Activated CD4-positive, alpha-beta T cell treated with anti-CD3 and anti-CD28 coated beads for 36 hours (primary cell): ENCODE measurements at regions of chr17 and their contacts with region 1.

Region 1: DNA sequence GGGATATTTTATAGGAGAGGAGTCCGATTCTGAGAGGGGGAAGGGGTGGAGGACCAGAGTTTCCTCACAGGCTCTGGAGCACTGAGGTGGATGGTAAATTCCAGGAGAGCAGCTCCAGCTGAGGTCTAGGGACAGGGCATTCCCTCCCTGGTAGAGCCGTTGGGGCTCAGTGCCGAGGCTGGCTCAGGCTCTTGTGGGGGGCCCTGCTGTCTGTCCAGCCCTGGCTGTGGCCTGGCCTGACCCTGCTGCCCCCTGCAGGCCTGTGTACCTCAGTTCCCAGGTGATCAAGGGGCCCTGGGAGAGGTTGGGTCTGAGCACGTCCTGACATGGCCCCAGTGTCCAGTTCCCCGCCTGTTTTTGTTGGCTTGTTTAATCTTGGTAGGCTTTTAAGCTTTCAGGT is 16.8 kb downstream of the ZNF750 start:
- DNase-seq: no peak
- ATAC-seq: no peak
- H3K4me3 Mint-ChIP-seq: no peak overlapping the region
- H3K27ac Mint-ChIP-seq: no peak overlapping the region
- H3K4me1 Mint-ChIP-seq: no peaks in the 10 kb centered on the region
- H3K27me3 Mint-ChIP-seq: no peaks in the 10 kb centered on the region

Region 2: GRCh38 chr17:82810644-82811430 is 12.2 kb before region 1 on chr17:
- CTCF ChIA-PET with region 1: no interaction called
- POLR2A ChIA-PET with region 1: interaction called, 11 read pairs
- intact Hi-C with region 1: no loop called
- DNase-seq: no peak
- ATAC-seq: no peak
- H3K4me3 Mint-ChIP-seq: no peak overlapping the region
- H3K27ac Mint-ChIP-seq: no peak overlapping the region
- H3K4me1 Mint-ChIP-seq: peaks cover 2% of the 10 kb centered on the region
- H3K27me3 Mint-ChIP-seq: no peaks in the 10 kb centered on the region

Region 3: DNA sequence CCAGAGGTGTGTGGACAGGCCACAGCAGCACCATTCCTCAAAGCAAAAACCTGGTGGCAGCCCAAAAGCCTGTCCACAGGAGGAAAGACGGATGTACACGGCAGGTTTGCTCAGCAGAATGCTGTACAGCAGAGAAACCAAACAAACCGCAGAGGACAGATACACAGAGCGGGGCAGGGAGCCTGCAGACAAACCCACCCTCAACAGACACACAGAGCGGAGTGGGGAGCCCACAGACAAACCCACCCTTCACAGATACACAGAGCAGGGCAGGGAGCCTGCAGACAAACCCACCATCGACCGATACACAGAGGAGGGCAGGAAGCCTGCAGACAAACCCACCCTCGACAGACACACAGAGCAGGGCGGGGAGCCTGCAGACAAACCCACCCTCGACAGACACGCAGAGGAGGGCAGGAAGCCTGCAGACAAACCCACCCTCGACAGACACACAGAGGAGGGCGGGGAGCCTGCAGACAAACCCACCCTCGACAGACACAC is 203.4 kb after region 1 on chr17:
- CTCF ChIA-PET with region 1: no interaction called
- POLR2A ChIA-PET with region 1: no interaction called
- intact Hi-C with region 1: no loop called
- DNase-seq: no peak
- ATAC-seq: no peak
- H3K4me3 Mint-ChIP-seq: no peak overlapping the region
- H3K27ac Mint-ChIP-seq: no peak overlapping the region
- H3K4me1 Mint-ChIP-seq: peaks cover 10% of the 10 kb centered on the region
- H3K27me3 Mint-ChIP-seq: no peaks in the 10 kb centered on the region